HepG2 (cell line): ENCODE measurements at regions of chr4 and their contacts with region 1.

Region 1: GRCh38 chr4:123064390-123064789 is 142.0 kb upstream of the NUDT6 start:
- DNase-seq: peak; percentile 94
- ATAC-seq: peak; percentile 100
- H3K4me3 ChIP-seq: peak overlapping the region in 1 of 3 experiments; percentile 18; a peak in 1 of 6 replicates
- H3K27ac ChIP-seq: peak overlapping the region; percentile 75
- H3K4me1 ChIP-seq: peaks cover 21% of the 10 kb centered on the region
- H3K27me3 ChIP-seq: no peaks in the 10 kb centered on the region
- CTCF ChIP-seq: no peak
- EP300 ChIP-seq: peak in 1 of 2 experiments; percentile 84; a peak in 2 of 4 replicates
- POLR2A ChIP-seq: no peak
- RAD21 ChIP-seq: no peak

Region 2: GRCh38 chr4:122525865-122526264 is 538.5 kb before region 1 on chr4:
- CTCF ChIA-PET with region 1: no interaction called
- POLR2A ChIA-PET with region 1: no interaction called
- in situ Hi-C with region 1: no loop called
- intact Hi-C with region 1: no loop called
- DNase-seq: peak; percentile 43
- ATAC-seq: peak; percentile 94
- H3K4me3 ChIP-seq: no peak overlapping the region
- H3K27ac ChIP-seq: no peak overlapping the region
- H3K4me1 ChIP-seq: peaks cover 11% of the 10 kb centered on the region
- H3K27me3 ChIP-seq: no peaks in the 10 kb centered on the region; a peak in 1 of 5 replicates
- CTCF ChIP-seq: no peak
- EP300 ChIP-seq: peak in 1 of 2 experiments; percentile 35; a peak in 1 of 4 replicates
- POLR2A ChIP-seq: no peak
- RAD21 ChIP-seq: no peak

Region 3: DNA sequence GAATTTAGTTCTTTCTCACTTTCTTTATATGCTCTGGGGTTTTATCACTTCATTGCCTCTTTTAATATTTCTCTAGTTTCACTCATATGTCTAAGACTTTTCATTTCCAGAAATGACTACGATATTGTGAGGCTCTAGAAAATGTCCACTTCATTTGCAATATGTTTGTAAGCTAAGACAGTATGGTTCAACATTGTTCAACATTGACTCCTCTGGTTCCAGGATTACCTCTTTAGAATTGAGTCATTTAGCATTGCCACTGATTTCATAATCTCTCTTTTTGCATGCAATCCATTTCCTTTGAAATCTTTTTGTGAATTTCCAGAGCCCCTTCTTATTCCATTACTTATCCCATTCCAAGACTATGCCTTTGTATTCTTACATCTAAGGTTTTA is 299.6 kb before region 1 on chr4:
- CTCF ChIA-PET with region 1: no interaction called
- POLR2A ChIA-PET with region 1: no interaction called
- in situ Hi-C with region 1: no loop called
- intact Hi-C with region 1: loop called (anchors 10 kb)
- DNase-seq: no peak
- ATAC-seq: no peak
- H3K4me3 ChIP-seq: no peak overlapping the region
- H3K27ac ChIP-seq: no peak overlapping the region
- H3K4me1 ChIP-seq: peaks cover 66% of the 10 kb centered on the region
- H3K27me3 ChIP-seq: no peaks in the 10 kb centered on the region
- CTCF ChIP-seq: no peak
- EP300 ChIP-seq: no peak
- POLR2A ChIP-seq: no peak
- RAD21 ChIP-seq: no peak

Region 4: DNA sequence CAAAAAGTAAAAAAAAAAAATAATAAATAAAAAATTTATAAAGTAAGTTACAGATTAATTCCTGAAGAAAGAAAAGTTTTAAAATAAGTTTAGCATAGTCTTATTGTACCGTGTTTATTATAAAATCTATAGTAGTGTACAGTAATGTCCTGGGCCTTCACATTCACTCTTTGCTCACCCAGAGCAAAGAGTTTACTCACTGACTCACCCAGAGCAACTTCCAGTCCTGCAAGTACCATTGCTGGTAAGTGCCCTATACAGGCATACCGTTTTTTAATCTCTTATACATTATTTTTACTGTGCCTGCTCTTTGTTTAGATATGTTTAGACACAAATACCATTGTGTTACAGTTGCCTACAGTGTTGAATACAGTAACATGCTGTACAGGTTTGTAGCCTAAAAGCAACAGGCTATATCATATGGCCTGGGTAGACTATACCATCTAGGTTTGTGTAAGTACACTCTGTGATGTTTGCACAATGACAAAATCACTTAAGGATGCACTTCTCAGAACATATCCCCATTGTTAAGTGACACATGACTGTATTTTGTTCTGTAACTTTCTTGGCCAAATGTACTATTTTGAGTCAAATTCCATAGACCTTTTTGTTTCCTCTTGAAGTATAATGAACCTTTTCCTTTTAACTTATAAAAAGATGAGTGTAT is 57.0 kb after region 1 on chr4:
- CTCF ChIA-PET with region 1: no interaction called
- POLR2A ChIA-PET with region 1: no interaction called
- in situ Hi-C with region 1: no loop called
- intact Hi-C with region 1: no loop called
- DNase-seq: peak; percentile 69
- ATAC-seq: peak; percentile 93
- H3K4me3 ChIP-seq: no peak overlapping the region
- H3K27ac ChIP-seq: no peak overlapping the region
- H3K4me1 ChIP-seq: peaks cover 13% of the 10 kb centered on the region
- H3K27me3 ChIP-seq: no peaks in the 10 kb centered on the region; a peak in 1 of 5 replicates
- CTCF ChIP-seq: no peak
- EP300 ChIP-seq: no peak
- POLR2A ChIP-seq: no peak
- RAD21 ChIP-seq: no peak

Region 5: DNA sequence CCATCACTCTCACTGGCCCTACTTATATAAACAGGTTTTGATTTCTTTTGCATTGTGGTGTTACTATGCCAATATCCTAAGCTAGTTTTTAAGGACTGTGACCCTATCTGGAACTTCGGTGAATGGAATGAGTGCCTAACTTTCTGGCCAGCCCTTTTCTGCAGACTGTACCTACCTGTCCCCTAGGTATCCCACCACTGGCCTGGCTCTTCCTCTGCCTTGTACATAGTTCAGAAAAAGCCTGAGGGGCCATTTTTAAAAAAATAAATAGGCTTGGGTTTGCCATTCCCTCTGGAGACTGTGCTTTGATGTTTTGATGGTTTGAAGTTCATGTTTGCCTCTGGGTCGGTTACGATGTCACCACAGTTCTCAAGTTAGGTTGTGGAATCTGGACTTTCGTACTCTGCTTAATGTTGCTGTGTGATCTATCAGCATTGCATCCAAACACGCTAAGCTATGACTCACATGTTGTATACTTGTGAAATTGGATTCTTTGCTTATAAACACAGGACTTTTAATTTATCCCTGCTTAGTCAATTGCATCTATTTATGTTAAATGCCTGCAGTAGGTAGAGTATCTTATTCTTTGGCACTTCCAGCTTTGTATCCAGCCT is 1466.2 kb after region 1 on chr4:
- CTCF ChIA-PET with region 1: no interaction called
- POLR2A ChIA-PET with region 1: no interaction called
- in situ Hi-C with region 1: no loop called
- intact Hi-C with region 1: loop called (anchors 10 kb)
- DNase-seq: peak; percentile 99
- ATAC-seq: peak; percentile 95
- H3K4me3 ChIP-seq: peak overlapping the region in 1 of 3 experiments; percentile 34; a peak in 1 of 6 replicates
- H3K27ac ChIP-seq: peak overlapping the region; percentile 93
- H3K4me1 ChIP-seq: peaks cover 86% of the 10 kb centered on the region
- H3K27me3 ChIP-seq: no peaks in the 10 kb centered on the region
- CTCF ChIP-seq: no peak
- EP300 ChIP-seq: peak; percentile 88 to 99
- POLR2A ChIP-seq: peak in 1 of 2 experiments; percentile 65; a peak in 1 of 4 replicates
- RAD21 ChIP-seq: 0 out of 2 replicates have a peak, but pooled peaks have one; percentile 31